Aorta (tissue), 5 donors: ENCODE measurements at regions of chr16 and their contacts with region 1.

Region 1: DNA sequence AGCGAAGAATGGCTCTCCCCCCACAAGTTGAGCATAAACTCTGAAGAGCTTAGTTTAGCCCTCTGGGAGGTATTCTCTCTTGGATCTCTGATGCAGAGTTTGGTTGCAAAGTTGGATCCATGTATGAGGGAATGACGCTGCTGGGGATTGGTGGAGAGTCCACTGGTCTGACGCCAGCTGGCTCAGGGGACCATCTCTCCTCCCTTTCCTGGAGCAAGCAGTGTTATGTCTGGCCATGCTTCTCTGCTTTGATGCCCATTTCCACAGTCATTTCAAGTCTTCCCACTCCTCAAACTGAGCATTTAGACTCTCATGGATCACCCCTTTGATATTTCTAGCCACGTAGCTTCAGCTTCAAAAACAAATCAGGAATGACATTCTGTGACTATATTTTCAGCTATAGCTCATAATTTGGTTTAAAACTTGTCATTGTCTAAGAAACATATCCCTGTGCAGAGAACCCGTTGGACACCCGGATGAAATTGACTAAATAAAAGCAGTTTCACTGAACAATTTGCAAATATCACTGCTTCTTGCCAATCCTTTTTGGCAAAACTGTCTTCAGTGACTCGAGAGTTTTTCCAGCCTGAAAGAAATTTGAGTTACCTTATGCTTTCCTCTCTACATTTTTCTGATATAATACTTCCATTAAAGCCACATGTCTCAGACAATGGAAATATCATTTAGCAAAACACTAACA is 193.4 kb upstream of the CDH11 start:
- DNase-seq: peak; percentile 90
- ATAC-seq: peak; percentile 88
- H3K4me3 ChIP-seq: no peak overlapping the region
- H3K27ac ChIP-seq: peak overlapping the region; percentile 35 to 48
- H3K4me1 ChIP-seq: peaks cover 12 to 21% of the 10 kb centered on the region in 2 donors
- H3K27me3 ChIP-seq: no peaks in the 10 kb centered on the region

Region 2: DNA sequence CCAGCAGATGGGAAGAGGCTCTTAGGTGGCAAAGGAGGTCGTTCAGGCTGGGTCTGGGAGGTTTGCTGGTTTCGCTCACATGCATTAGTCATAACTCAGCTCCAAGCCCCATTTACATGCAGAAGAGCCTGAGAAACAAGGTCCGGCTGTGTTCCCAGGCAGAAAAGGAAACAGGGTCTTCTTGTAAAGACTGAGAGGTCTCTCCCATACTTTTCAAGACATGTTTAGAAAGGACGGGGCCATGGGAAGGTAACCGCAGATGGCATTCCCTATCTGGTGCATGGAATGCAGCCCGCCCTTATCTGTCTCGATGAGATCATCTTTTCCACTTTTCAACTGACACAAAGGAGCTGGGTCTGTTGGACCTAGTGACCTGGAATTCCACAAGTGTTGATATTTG is 195.6 kb after region 1 on chr16:
- intact Hi-C with region 1: loop called in 1 of 2 experiments (anchors 10 kb)
- DNase-seq: no peak
- ATAC-seq: no peak
- H3K4me3 ChIP-seq: no peak overlapping the region
- H3K27ac ChIP-seq: no peak overlapping the region
- H3K4me1 ChIP-seq: peaks cover 6 to 7% of the 10 kb centered on the region in 2 donors
- H3K27me3 ChIP-seq: no peaks in the 10 kb centered on the region